Activated CD8-positive, alpha-beta T cell treated with anti-CD3 and anti-CD28 coated beads for 36 hours (primary cell): ENCODE measurements at regions of chr7 and their contacts with region 1.

Region 1: GRCh38 chr7:35906191-35906908 is 105.5 kb downstream of the SEPTIN7 start:
- DNase-seq: peak; percentile 75
- ATAC-seq: peak; percentile 87
- H3K4me3 Mint-ChIP-seq: no peak overlapping the region
- H3K27ac Mint-ChIP-seq: peak overlapping the region; percentile 49
- H3K4me1 Mint-ChIP-seq: peaks cover 9% of the 10 kb centered on the region
- H3K27me3 Mint-ChIP-seq: no peaks in the 10 kb centered on the region
- CTCF ChIP-seq: peak; percentile 92

Region 2: GRCh38 chr7:35707422-35707821 is 198.9 kb before region 1 on chr7:
- CTCF ChIA-PET with region 1: interaction called, 37 read pairs
- POLR2A ChIA-PET with region 1: interaction called, 3 read pairs
- intact Hi-C with region 1: loop called (anchors 2 kb)
- DNase-seq: no peak
- ATAC-seq: no peak
- H3K4me3 Mint-ChIP-seq: no peak overlapping the region
- H3K27ac Mint-ChIP-seq: no peak overlapping the region
- H3K4me1 Mint-ChIP-seq: peaks cover 14% of the 10 kb centered on the region
- H3K27me3 Mint-ChIP-seq: no peaks in the 10 kb centered on the region
- CTCF ChIP-seq: no peak

Region 3: GRCh38 chr7:35854311-35854710 is 52.0 kb before region 1 on chr7:
- CTCF ChIA-PET with region 1: no interaction called
- POLR2A ChIA-PET with region 1: no interaction called
- intact Hi-C with region 1: no loop called
- DNase-seq: no peak
- ATAC-seq: no peak
- H3K4me3 Mint-ChIP-seq: no peak overlapping the region
- H3K27ac Mint-ChIP-seq: no peak overlapping the region
- H3K4me1 Mint-ChIP-seq: peaks cover 52% of the 10 kb centered on the region
- H3K27me3 Mint-ChIP-seq: no peaks in the 10 kb centered on the region
- CTCF ChIP-seq: no peak

Region 4: DNA sequence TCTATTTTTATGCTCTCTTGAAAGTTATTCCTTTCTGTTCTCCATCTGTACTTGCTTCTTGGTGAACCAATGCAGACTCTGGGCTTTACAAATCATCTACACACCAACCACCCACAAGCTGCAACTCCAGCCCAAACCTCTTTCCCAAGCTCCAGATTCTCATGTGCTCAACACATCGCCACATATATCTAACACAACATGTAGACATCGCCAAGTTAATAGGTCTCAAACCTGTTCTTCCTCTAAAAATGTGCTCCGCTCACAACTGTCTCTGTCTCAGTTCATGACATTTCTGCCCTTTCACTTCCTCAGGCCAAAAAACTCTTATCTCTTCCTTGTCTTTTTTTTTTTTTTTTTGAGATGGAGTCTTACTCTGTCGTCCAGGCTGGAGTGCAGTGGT is 151.0 kb after region 1 on chr7:
- CTCF ChIA-PET with region 1: no interaction called
- POLR2A ChIA-PET with region 1: no interaction called
- intact Hi-C with region 1: no loop called
- DNase-seq: no peak
- ATAC-seq: no peak
- H3K4me3 Mint-ChIP-seq: no peak overlapping the region
- H3K27ac Mint-ChIP-seq: no peak overlapping the region
- H3K4me1 Mint-ChIP-seq: no peaks in the 10 kb centered on the region
- H3K27me3 Mint-ChIP-seq: no peaks in the 10 kb centered on the region
- CTCF ChIP-seq: no peak